K562 (cell line): ENCODE measurements at regions of chr20 and their contacts with region 1.

Region 1: GRCh38 chr20:35652641-35653429 is 11.9 kb downstream of the CPNE1 start:
- DNase-seq: no peak
- ATAC-seq: peak; percentile 54
- H3K4me3 ChIP-seq: no peak overlapping the region
- H3K27ac ChIP-seq: no peak overlapping the region
- H3K4me1 ChIP-seq: no peaks in the 10 kb centered on the region; a peak in 1 of 5 replicates
- H3K27me3 ChIP-seq: no peaks in the 10 kb centered on the region
- CTCF ChIP-seq: no peak
- EP300 ChIP-seq: no peak
- POLR2A ChIP-seq: peak; percentile 32; the same call in 1 of the 2 replicates
- RAD21 ChIP-seq: no peak

Region 2: GRCh38 chr20:35664544-35665221 is 11.8 kb after region 1 on chr20 and contains the starts of genes CPNE1 and RBM12:
- CTCF ChIA-PET with region 1: no interaction called
- POLR2A ChIA-PET with region 1: interaction called, 26 read pairs
- in situ Hi-C with region 1: no loop called
- intact Hi-C with region 1: no loop called
- DNase-seq: peak; percentile 94 to 96 (median 96)
- ATAC-seq: peak; percentile 89
- H3K4me3 ChIP-seq: peak within 1 kb of the TSS; percentile 57
- H3K27ac ChIP-seq: peak within 1 kb of the TSS; percentile 98
- H3K4me1 ChIP-seq: peaks cover 17 to 24% of the 10 kb centered on the region in 2 experiments; a peak in 4 of 5 replicates
- H3K27me3 ChIP-seq: no peaks in the 10 kb centered on the region
- CTCF ChIP-seq: no peak
- EP300 ChIP-seq: no peak
- POLR2A ChIP-seq: peak; percentile 97
- RAD21 ChIP-seq: no peak
- polyA plus RNA-seq, gene CPNE1: 45.5 to 56.0 TPM
- polyA plus RNA-seq, gene RBM12: 5.0 to 10.0 TPM